Panc1 (cell line): ENCODE measurements at regions of chr11 and their contacts with region 1.

Region 1: GRCh38 chr11:78465169-78465942 is 47.7 kb upstream of the GAB2 start:
- DNase-seq: no peak
- ATAC-seq: no peak
- H3K4me3 ChIP-seq: no peak overlapping the region
- H3K27ac ChIP-seq: no peak overlapping the region
- H3K4me1 ChIP-seq: no peaks in the 10 kb centered on the region
- H3K27me3 ChIP-seq: no peaks in the 10 kb centered on the region
- CTCF ChIP-seq: no peak

Region 2: DNA sequence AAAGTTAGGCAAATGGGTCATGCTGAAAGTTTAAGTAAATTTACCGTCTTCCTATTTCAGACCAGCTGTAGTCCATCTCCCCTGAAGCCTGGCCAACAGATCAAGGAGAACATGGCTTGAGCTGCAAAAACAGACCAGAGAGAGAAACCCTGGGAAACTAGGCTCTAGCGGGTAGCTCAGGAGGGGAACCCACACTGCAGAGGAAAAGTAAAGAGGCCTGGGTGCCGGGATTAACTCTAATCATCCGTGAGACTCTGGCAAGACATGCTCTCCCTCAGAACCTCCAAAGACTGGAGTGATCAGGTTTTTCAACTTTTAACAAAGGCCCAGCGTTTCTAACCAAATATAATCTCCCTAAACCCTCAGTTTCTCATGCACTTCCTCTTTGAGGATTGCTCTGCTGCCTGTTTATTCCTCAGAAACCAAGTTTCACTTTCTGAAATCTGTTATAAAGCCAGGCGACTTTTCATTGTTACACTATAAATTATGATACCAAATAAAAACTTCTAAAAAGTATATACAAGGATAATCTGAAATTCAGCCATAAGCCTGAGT is 115.2 kb before region 1 on chr11:
- CTCF ChIA-PET with region 1: no interaction called
- POLR2A ChIA-PET with region 1: no interaction called
- in situ Hi-C with region 1: no loop called
- intact Hi-C with region 1: no loop called
- DNase-seq: no peak
- ATAC-seq: 0 out of 2 replicates have a peak, but pooled peaks have one; percentile 22
- H3K4me3 ChIP-seq: peak overlapping the region; percentile 7 to 17; a peak in 3 of 4 replicates
- H3K27ac ChIP-seq: peak overlapping the region; percentile 78
- H3K4me1 ChIP-seq: peaks cover 23% of the 10 kb centered on the region
- H3K27me3 ChIP-seq: no peaks in the 10 kb centered on the region
- CTCF ChIP-seq: no peak

Region 3: GRCh38 chr11:78564490-78565467 is 99.4 kb after region 1 on chr11:
- CTCF ChIA-PET with region 1: interaction called, 30 read pairs
- POLR2A ChIA-PET with region 1: no interaction called
- in situ Hi-C with region 1: no loop called
- intact Hi-C with region 1: no loop called
- DNase-seq: peak; percentile 43
- ATAC-seq: peak; percentile 72
- H3K4me3 ChIP-seq: no peak overlapping the region
- H3K27ac ChIP-seq: no peak overlapping the region
- H3K4me1 ChIP-seq: peaks cover 6% of the 10 kb centered on the region; the same call in 1 of the 2 replicates
- H3K27me3 ChIP-seq: no peaks in the 10 kb centered on the region
- CTCF ChIP-seq: peak; percentile 85